HAP-1 (cell line): ENCODE measurements at regions of chr2 and their contacts with region 1.

Region 1: GRCh38 chr2:84495539-84496146 is 20.7 kb upstream of the DNAH6 start:
- DNase-seq: peak; percentile 38 to 55
- H3K4me3 ChIP-seq: no peak overlapping the region
- H3K4me1 ChIP-seq: no peaks in the 10 kb centered on the region
- H3K27me3 ChIP-seq: no peaks in the 10 kb centered on the region; the same call in 1 of the 2 replicates

Region 2: GRCh38 chr2:84881581-84882414 is 386.2 kb after region 1 on chr2:
- in situ Hi-C with region 1: loop called (anchors 10 kb)
- DNase-seq: peak; percentile 82 to 88
- H3K4me3 ChIP-seq: peak overlapping the region; percentile 32
- H3K4me1 ChIP-seq: peaks cover 7% of the 10 kb centered on the region
- H3K27me3 ChIP-seq: peaks cover 26% of the 10 kb centered on the region

Region 3: GRCh38 chr2:85308896-85309555 is 813.4 kb after region 1 on chr2:
- in situ Hi-C with region 1: loop called (anchors 25 kb)
- DNase-seq: no peak
- H3K4me3 ChIP-seq: no peak overlapping the region
- H3K4me1 ChIP-seq: no peaks in the 10 kb centered on the region
- H3K27me3 ChIP-seq: no peaks in the 10 kb centered on the region